Ascending aorta (tissue), 2 donors: ENCODE measurements at regions of chr9 and their contacts with region 1.

Region 1: GRCh38 chr9:124861342-124862229 is at the starts of genes ARPC5L and RPL35:
- DNase-seq: peak; percentile 74 to 97
- H3K4me3 ChIP-seq: peak within 1 kb of the TSS; percentile 88 to 98
- H3K27ac ChIP-seq: peak within 1 kb of the TSS; percentile 90 to 97
- H3K4me1 ChIP-seq: peaks cover 8 to 13% of the 10 kb centered on the region in 2 donors
- H3K27me3 ChIP-seq: no peaks in the 10 kb centered on the region
- CTCF ChIP-seq: peak in 2 of 3 experiments; percentile 24 to 25
- total RNA-seq, gene ARPC5L: 12.0 TPM
- total RNA-seq, gene RPL35: 2,123 TPM

Region 2: GRCh38 chr9:125143375-125144090 is 281.9 kb after region 1 on chr9 and contains the start of gene SCAI:
- intact Hi-C with region 1: loop called (anchors 10 kb)
- DNase-seq: peak; percentile 97 to 100
- H3K4me3 ChIP-seq: peak within 1 kb of the TSS; percentile 76 to 95
- H3K27ac ChIP-seq: peak within 1 kb of the TSS; percentile 56 to 63
- H3K4me1 ChIP-seq: peaks cover 0 to 8% of the 10 kb centered on the region in 2 donors
- H3K27me3 ChIP-seq: no peaks in the 10 kb centered on the region
- CTCF ChIP-seq: peak; percentile 98 to 99 (median 99)
- total RNA-seq, gene SCAI: 2.4 TPM